ENCODE measurements at regions of chr6 and their contacts with region 1.

Region 1: GRCh38 chr6:155327326-155328073 is 13.2 kb upstream of the TFB1M start:
- DNase-seq: peak; percentile 24
- H3K4me3 ChIP-seq: no peak overlapping the region
- H3K27ac ChIP-seq: no peak overlapping the region
- H3K4me1 ChIP-seq: no peaks in the 10 kb centered on the region
- H3K27me3 ChIP-seq: no peaks in the 10 kb centered on the region
- CTCF ChIP-seq: peak; percentile 40 to 84 (median 82)
- POLR2A ChIP-seq: no peak

Region 2: DNA sequence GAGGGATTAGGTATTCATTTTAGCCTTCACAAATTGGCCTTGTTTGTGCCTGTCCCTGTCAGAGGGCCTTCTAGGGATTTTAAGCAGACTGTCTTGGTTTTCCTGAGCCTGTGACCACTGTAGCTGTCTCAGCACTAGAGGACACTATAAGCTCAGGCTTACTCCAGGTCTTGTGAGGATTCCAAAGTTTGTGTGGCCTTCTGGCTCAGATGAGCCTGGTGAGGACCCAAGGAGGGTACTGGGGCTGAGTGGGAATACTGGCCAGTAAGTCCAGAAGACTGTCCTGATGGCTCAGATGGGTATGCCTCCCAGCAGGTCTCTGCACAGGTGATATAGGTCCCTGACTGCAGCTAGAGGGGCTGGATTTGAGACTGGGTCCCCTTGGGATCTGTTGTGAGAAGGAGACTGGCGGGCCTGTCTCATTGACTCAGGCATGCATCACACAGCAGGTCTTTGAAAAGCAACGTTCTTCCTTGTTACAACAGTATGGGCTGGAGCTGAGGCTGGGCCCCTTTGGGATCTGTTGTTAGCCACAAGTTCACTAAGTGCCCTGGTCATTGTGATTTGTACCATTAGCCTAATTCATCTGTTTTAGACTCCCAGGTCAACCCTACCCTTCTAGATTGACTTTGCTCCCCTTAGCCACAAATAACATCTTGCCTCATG is 13.1 kb after region 1 on chr6:
- intact Hi-C with region 1: no loop called
- DNase-seq: no peak
- H3K4me3 ChIP-seq: no peak overlapping the region
- H3K27ac ChIP-seq: no peak overlapping the region
- H3K4me1 ChIP-seq: no peaks in the 10 kb centered on the region
- H3K27me3 ChIP-seq: no peaks in the 10 kb centered on the region
- CTCF ChIP-seq: no peak
- POLR2A ChIP-seq: no peak

Region 3: DNA sequence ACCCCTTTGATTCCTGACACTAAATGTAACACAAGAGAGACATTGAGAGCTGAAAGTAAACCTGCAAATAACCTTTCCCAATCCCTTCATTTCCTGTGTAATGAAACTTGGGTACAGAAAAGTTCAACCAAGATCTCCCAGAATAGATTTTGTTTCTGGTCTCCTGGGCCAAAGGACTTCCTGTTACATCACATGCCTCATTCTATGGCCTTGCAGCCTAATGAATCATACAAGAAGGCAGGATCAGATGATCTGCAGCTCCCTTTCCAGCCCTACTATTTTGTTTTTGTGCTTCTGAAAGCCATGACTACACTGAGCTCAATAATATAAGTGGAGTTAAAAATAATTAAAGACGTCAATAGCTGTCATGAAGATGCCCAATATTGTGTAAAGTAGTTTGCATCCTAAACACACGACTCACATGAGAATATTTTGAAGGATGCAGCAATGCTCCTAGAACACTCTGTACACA is 201.5 kb after region 1 on chr6:
- intact Hi-C with region 1: loop called (anchors 10 kb)
- DNase-seq: no peak
- H3K4me3 ChIP-seq: no peak overlapping the region
- H3K27ac ChIP-seq: no peak overlapping the region
- H3K4me1 ChIP-seq: no peaks in the 10 kb centered on the region
- H3K27me3 ChIP-seq: no peaks in the 10 kb centered on the region
- CTCF ChIP-seq: no peak
- POLR2A ChIP-seq: no peak

Measured in prostate gland (tissue), 2 donors.